Psoas muscle (tissue), 8 donors: ENCODE measurements at regions of chr19 and their contacts with region 1.

Region 1: DNA sequence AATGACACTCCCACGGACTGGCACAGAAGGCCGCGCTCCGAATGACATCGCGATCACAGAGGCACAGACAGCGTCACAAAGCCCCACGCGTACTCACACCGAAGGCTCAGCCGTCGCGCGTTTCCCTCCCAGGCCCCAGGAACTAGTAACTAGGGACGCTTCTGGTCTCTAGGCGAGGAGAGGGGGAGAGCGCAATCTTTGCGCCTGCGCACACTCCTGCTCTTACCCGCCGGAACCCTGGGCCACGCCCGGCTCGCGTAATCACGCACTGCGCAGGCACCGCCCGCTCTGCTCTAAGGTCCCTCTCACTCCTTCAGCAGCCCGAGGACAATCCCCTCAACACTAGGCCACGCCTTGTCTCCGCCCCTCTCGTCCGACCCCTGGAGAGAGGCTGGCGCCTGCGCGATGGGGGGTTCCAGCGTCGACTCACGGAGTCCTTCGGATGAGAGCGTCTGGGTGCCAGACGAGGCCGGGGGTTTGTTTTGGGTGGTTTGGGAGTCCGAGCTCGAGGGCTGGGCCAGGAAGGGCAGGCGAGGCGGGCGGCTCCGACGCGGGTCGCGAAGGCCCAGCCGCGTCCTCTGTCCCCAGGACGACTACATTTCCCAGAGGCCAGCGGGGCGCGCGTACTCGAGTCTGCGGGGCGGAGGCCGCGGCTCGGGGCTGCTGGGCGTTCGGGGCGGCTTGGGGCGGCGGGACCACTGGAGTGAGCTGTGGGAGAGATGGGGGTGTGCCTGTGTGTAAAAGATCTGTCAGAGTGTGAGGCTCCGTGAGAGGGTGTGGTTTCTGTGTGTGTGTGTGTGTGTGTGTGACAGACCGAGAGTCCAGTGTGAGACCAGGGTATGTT is at the start of gene ZNF471:
- DNase-seq: peak; percentile 99
- ATAC-seq: peak; percentile 100
- H3K4me3 ChIP-seq: peak within 1 kb of the TSS; percentile 77
- H3K27ac ChIP-seq: peak within 1 kb of the TSS; percentile 97
- H3K4me1 ChIP-seq: peaks cover 12% of the 10 kb centered on the region
- H3K27me3 ChIP-seq: no peaks in the 10 kb centered on the region
- CTCF ChIP-seq: no peak
- total RNA-seq, gene ZNF471: 5.3 to 7.3 (median 5.4) TPM

Region 2: DNA sequence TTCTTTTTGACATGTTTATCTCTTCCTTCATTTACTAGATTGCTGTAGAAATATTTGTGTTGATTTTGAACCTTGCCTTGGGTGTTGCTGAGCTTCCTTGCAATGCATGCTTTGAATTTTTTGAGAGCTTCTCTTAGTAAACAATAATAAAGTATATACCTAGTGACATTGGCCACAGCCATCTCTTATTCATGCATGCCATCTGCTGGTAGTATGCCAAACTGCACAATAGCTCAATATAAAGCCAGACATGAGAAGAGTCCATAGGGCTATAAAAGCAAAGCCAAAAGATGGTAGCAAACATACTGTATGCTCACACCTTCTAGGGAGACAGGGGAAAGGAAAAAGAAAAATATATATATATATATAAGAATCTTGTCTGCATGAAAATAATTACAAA is 174.2 kb before region 1 on chr19:
- intact Hi-C with region 1: no loop called
- DNase-seq: no peak
- ATAC-seq: no peak
- H3K4me3 ChIP-seq: no peak overlapping the region
- H3K27ac ChIP-seq: no peak overlapping the region
- H3K4me1 ChIP-seq: no peaks in the 10 kb centered on the region
- H3K27me3 ChIP-seq: no peaks in the 10 kb centered on the region
- CTCF ChIP-seq: peak; percentile 31

Region 3: GRCh38 chr19:56403764-56404704 is 103.6 kb before region 1 on chr19 and contains the start of gene ZNF583:
- intact Hi-C with region 1: loop called (anchors 10 kb)
- DNase-seq: peak; percentile 97 to 99
- ATAC-seq: peak; percentile 99 to 100 (median 99)
- H3K4me3 ChIP-seq: peak within 1 kb of the TSS; percentile 80
- H3K27ac ChIP-seq: peak within 1 kb of the TSS; percentile 91
- H3K4me1 ChIP-seq: peaks cover 5% of the 10 kb centered on the region
- H3K27me3 ChIP-seq: no peaks in the 10 kb centered on the region
- CTCF ChIP-seq: no peak
- total RNA-seq, gene ZNF583: 2.5 to 5.3 (median 3.1) TPM

Region 4: DNA sequence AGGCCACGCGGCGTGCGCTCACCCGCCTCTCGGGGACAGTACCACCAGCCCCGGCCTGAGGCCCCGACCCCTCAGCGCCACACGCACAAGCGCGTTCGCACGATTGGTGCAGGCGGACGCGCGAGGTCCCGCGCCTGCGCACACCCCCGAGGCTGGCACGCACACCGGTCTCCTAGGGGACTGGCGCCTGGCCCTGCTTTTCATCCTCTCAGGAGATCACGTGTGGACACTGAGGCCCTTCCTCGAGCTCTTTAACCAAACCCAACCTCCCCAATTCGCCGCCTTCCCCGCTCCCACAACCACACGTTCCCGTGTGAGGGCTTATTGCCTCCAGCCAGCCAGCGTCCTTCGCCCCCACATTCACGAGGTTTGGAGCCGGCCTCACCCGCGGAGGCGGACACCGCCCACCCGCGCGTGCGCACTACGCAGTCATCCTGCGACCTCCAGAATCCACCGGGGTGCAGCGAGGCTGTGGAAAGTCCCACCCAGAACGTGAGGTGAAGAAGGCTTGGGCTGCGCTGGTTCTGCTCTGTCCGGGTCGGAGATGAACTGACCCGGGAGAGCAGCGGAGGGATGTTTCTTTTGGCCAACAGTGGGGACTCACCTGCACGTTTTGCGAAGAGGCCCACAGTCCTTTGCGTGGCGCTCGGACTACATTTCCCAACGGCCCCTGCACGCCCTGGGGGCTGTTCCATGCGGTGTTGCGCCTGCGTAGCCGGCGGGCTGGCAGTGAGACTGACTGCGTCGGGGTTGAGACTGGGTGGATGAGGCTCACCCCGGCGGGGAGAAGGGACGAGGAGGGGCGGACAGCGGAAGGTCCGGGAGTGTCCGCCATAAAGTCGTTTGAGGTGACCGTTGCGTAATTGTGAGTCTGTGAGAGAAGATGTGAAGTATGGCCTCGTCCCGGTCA is 30.0 kb before region 1 on chr19:
- intact Hi-C with region 1: loop called in 1 of 2 experiments (anchors 5 kb)
- DNase-seq: peak; percentile 93 to 94
- ATAC-seq: peak; percentile 96 to 97 (median 97)
- H3K4me3 ChIP-seq: peak overlapping the region; percentile 87
- H3K27ac ChIP-seq: peak overlapping the region; percentile 83
- H3K4me1 ChIP-seq: no peaks in the 10 kb centered on the region
- H3K27me3 ChIP-seq: no peaks in the 10 kb centered on the region
- CTCF ChIP-seq: no peak

Region 5: DNA sequence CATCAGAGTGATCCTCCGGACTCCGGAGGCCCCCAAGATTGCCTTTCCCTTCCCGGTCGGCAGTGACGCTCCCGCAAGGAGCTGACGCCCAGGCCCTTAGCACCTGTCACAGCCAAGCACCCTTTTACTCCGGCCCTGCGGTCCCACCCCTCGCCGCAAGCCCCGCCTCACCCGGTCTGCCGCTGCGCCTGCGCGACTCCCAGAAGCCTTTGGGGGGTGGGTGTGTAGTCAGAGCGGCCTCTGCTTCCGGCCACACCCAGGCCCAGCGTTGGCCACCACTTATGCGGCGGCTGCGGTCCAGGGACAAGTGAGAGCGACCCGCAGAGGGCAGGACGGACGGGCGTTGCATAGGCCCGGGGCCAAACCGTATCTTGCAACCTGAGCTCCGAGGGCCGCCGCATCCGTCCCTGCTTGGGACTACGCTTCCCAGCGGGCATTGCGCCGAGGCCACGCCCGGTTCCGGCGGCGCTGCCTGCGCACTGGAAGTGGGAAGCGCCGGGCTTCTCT is 30.6 kb after region 1 on chr19:
- intact Hi-C with region 1: loop called in 1 of 2 experiments (anchors 2 kb)
- DNase-seq: peak; percentile 90 to 96
- ATAC-seq: peak; percentile 97 to 99 (median 98)
- H3K4me3 ChIP-seq: peak overlapping the region; percentile 97
- H3K27ac ChIP-seq: peak overlapping the region; percentile 97
- H3K4me1 ChIP-seq: peaks cover 4% of the 10 kb centered on the region
- H3K27me3 ChIP-seq: no peaks in the 10 kb centered on the region
- CTCF ChIP-seq: no peak

Region 6: GRCh38 chr19:56567274-56568120 is 59.8 kb after region 1 on chr19 and contains the start of gene ZNF470:
- intact Hi-C with region 1: loop called in 1 of 2 experiments (anchors 1 kb)
- DNase-seq: peak; percentile 97
- ATAC-seq: peak; percentile 98 to 100 (median 100)
- H3K4me3 ChIP-seq: peak within 1 kb of the TSS; percentile 100
- H3K27ac ChIP-seq: peak within 1 kb of the TSS; percentile 84
- H3K4me1 ChIP-seq: no peaks in the 10 kb centered on the region
- H3K27me3 ChIP-seq: no peaks in the 10 kb centered on the region
- CTCF ChIP-seq: no peak
- total RNA-seq, gene ZNF470: 0.87 to 2.6 (median 1.6) TPM